Activated T-helper 2 cell treated with anti-CD3 and anti-CD28 coated beads, Interferon-gamma antibody, Interleukin-2, Interleukin-4, amounts not matched to agents 10 μg/mL and 5 μg/mL and 100 μg/mL, durations not matched to agents 14 hours and 24 hours and 36 hours (primary cell): ENCODE measurements at regions of chr22 and their contacts with region 1.

Region 1: DNA sequence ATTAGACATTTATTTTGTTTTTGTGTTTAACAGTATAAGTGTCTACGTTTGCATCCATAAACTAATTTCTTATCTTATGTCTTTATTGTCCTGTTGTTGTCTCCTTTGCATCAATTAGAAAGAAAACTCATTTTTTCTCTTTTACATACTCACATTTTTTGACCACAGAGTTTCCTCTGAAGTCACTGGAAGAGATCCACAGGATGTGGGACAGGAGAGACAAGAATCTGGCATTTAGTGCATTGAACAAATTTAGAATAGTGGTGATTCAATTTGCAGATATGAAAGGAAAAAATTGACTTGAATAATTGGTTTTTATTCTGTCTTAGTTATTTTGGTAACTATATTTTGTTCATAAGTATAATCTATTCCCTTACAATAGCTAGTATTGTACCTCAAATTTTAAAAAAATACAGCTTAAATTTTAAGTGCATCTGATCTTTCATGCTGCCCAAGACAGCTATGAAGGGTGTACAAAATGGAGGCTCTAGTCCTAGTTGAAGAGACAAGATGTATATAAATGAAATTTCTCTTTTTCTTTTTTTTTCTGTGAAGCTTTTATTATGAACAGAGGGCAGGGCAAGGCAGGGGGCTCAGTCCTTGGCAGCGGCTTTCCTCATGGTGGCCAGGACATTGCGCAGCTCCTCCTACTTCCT is 24.4 kb downstream of the HORMAD2 start:
- DNase-seq: no peak
- H3K4me3 Mint-ChIP-seq: peak overlapping the region; percentile 26
- H3K27ac Mint-ChIP-seq: peak overlapping the region; percentile 95
- H3K4me1 Mint-ChIP-seq: peaks cover 64% of the 10 kb centered on the region
- H3K27me3 Mint-ChIP-seq: no peaks in the 10 kb centered on the region

Region 2: GRCh38 chr22:30089655-30089974 is 15.0 kb before region 1 on chr22:
- intact Hi-C with region 1: no loop called
- DNase-seq: no peak
- H3K4me3 Mint-ChIP-seq: no peak overlapping the region
- H3K27ac Mint-ChIP-seq: peak overlapping the region; percentile 2
- H3K4me1 Mint-ChIP-seq: peaks cover 48% of the 10 kb centered on the region
- H3K27me3 Mint-ChIP-seq: no peaks in the 10 kb centered on the region

Region 3: DNA sequence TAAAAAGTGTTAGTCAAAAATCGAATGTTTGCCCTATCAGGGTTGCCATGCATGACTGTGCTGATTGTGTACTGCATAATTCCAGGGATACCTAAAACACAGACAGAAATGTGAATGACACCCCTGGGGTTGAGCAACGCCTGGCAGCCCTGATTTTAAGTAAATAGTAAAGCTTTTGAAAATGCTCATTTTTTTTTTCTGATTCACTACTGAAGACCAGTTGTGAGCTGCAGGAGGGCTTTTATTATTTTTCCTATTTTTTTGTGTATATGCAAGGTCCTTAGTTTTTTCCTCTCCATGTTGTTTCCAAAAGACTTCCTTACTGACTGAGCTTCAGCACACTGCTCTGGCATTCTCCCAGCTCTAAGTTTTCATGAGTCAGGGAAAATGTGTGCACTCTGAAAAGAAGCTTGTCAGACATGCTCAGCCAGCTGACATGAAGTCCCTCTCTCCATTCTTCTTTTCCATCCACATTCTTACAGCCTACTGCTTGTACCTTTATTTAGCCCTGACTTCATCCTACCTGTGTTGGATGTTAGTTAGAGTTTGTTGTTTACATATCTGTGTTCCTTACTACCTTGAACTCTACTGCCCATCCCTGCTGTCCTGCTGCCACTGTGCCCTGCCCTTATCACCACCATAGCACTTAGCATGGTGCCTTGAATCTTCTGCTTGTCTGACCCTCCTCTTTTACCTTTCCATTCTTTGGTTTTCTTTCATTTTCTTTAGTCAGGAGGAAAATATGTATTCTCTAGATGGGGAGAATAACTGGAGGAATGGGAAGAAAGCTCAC is 55.1 kb after region 1 on chr22:
- intact Hi-C with region 1: loop called (anchors 2 kb)
- DNase-seq: no peak
- H3K4me3 Mint-ChIP-seq: peak overlapping the region; percentile 51
- H3K27ac Mint-ChIP-seq: peak overlapping the region; percentile 98
- H3K4me1 Mint-ChIP-seq: peaks cover 73% of the 10 kb centered on the region
- H3K27me3 Mint-ChIP-seq: no peaks in the 10 kb centered on the region

Region 4: DNA sequence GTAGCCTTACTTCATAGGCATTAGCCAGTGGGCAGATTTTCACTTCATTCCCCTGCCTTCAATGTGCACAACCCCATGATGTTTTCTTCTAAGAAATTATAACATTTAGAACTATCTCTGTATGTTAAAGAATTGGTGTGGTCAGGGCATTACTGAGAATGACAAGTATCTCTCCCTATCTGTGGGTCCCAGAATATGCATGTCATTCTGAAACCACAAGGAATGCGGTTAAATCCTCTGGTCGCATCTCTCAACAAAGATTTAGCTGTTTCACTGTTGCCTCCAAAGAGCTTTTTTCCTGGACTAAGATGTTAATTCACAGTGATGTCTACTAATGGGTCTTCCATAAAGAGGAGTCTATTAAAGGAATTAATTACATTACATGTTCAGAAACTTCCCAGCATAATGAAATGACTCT is 79.2 kb after region 1 on chr22:
- intact Hi-C with region 1: loop called (anchors 2 kb)
- DNase-seq: peak; percentile 37
- H3K4me3 Mint-ChIP-seq: peak overlapping the region; percentile 58
- H3K27ac Mint-ChIP-seq: peak overlapping the region; percentile 98
- H3K4me1 Mint-ChIP-seq: peaks cover 84% of the 10 kb centered on the region
- H3K27me3 Mint-ChIP-seq: no peaks in the 10 kb centered on the region

Region 5: DNA sequence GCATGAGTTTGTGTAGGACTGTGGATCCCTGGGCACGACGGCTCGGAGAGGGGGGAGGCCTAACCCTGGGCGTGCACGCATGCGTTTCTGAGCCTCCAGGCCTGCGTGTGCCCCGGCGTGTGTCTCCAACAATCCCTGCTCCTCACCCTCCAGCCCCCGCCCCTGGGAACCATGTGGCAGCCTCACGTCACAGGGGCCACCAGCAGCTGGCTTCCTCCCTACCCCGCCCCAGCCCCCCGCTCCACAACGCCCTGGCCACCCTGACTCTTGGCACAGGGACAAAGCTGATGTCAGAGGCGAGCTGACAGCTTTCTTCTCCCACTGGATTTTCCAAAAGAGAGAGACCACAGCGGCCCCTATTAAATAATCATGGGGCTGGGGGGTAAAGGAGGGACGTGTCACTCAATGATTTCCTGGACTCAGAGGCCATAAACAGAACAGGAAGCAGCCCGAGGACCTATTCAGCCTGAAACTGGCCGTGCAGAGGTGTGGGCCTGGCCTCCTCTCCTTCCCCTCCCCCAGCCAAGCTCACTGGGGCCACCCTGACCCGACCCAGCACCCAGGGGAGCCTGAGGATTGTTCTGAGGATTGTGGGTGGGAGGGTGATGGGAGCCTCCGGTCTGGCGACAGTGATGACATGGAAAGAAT is 148.7 kb after region 1 on chr22:
- intact Hi-C with region 1: loop called (anchors 1 kb)
- DNase-seq: no peak
- H3K4me3 Mint-ChIP-seq: no peak overlapping the region
- H3K27ac Mint-ChIP-seq: peak overlapping the region; percentile 79
- H3K4me1 Mint-ChIP-seq: peaks cover 58% of the 10 kb centered on the region
- H3K27me3 Mint-ChIP-seq: no peaks in the 10 kb centered on the region

Region 6: GRCh38 chr22:30326706-30327362 is 222.2 kb after region 1 on chr22 and contains the start of gene TBC1D10A:
- intact Hi-C with region 1: loop called (anchors 5 kb)
- DNase-seq: peak; percentile 91
- H3K4me3 Mint-ChIP-seq: peak within 1 kb of the TSS; percentile 76
- H3K27ac Mint-ChIP-seq: peak within 1 kb of the TSS; percentile 75
- H3K4me1 Mint-ChIP-seq: peaks cover 47% of the 10 kb centered on the region
- H3K27me3 Mint-ChIP-seq: no peaks in the 10 kb centered on the region
- total RNA-seq, gene TBC1D10A: 26.8 and 29.4 TPM in 2 replicates